ENCODE measurements at regions of chr13 and their contacts with region 1.

Region 1: GRCh38 chr13:41652727-41653361 is 195.5 kb downstream of the RGCC start:
- DNase-seq: peak; percentile 88
- H3K4me3 ChIP-seq: no peak overlapping the region
- H3K27ac ChIP-seq: peak overlapping the region; percentile 43
- H3K4me1 ChIP-seq: peaks cover 27% of the 10 kb centered on the region
- H3K27me3 ChIP-seq: no peaks in the 10 kb centered on the region
- CTCF ChIP-seq: peak; percentile 12 to 44
- POLR2A ChIP-seq: no peak

Region 2: DNA sequence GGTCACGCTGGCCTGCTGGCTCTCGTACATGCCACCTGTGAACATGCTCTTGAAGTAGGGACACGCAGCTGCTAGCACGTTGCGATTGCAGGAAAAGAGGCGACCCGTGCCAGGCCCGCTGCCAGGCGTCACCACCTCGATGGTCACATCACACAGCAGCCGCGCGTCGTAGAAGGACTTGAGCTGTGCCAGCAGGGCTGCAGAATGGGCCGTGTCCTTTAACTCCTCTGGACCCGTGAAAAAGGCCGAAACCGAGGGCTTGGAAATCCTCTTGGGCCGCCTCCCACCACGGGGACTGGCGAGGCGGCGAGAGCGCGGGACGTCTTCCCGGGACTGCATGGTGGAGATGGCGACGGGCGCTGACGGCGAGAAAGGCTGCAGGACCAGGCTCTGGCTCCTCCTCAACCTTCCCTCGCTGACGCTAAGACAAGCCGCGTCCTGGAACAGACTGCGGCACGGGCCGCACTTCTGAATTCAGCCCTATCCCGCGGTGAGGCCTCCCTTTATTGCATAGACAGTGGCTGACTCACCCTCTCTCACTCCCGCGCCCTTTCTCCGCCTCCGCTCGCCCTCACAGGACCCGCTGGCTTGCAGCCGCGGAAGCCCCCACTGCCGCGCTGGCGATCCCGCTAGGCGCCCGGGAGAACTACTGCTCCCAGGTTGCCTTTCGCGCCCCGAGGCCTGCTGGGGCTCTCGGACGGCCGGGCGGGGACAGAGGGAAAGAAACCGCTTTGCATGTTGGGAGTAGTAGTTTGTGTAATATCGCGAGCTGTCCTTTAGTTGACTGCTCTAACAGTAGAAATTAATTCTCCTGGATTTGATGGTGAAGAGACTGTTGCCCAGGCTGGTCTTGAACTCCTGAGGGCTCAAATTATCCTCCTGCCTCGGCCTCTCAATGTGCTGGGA is 458.7 kb before region 1 on chr13 and contains the start of gene KBTBD7:
- CTCF ChIA-PET with region 1: no interaction called
- POLR2A ChIA-PET with region 1: no interaction called
- dilution Hi-C with region 1: no loop called
- intact Hi-C with region 1: loop called (anchors 10 kb)
- DNase-seq: peak; percentile 99
- H3K4me3 ChIP-seq: peak within 1 kb of the TSS; percentile 48 to 60 (median 53)
- H3K27ac ChIP-seq: peak within 1 kb of the TSS; percentile 78
- H3K4me1 ChIP-seq: peaks cover 4% of the 10 kb centered on the region
- H3K27me3 ChIP-seq: no peaks in the 10 kb centered on the region
- CTCF ChIP-seq: no peak
- POLR2A ChIP-seq: peak; percentile 80
- total RNA-seq, gene KBTBD7: 3.1 and 4.4 TPM in 2 replicates

Region 3: DNA sequence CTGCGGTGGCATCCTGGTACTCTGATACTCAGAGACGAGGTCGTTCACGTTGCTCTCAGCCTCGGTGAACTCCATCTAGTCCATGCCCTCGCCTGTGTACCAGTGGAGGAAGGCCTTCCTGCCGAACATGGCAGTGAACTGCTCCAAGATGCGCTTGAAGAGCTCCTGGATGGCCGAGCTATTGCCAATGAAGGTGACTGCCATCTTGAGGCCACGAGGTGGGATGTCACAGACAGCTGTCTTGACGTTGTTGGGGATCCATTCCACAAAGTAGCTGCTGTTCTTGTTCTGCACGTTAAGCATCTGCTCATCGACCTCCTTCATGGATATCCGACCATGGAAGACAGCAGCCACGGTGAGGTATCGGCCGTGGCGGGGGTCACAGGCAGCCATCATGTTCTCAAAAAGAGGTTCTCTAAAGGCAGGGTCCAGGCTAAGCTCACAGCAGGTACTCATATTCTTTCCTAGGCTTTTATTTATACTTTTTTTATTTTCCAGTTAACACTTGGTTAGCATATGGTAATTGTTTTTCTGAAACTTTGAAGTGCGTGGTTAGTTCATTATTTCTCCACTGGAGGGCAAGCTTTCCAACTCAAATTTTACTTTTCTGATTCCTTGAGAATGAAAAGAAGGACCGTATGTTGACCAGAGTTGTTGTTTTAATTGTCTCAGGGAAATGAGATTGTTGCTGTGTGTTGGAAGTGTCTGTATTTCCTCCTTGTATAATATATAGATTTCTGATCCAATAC is 267.9 kb before region 1 on chr13:
- CTCF ChIA-PET with region 1: interaction called, 77 read pairs
- POLR2A ChIA-PET with region 1: no interaction called
- dilution Hi-C with region 1: no loop called
- intact Hi-C with region 1: loop called (anchors 1 kb)
- DNase-seq: peak; percentile 43
- H3K4me3 ChIP-seq: no peak overlapping the region
- H3K27ac ChIP-seq: no peak overlapping the region
- H3K4me1 ChIP-seq: peaks cover 4% of the 10 kb centered on the region
- H3K27me3 ChIP-seq: peaks cover 0 to 4% of the 10 kb centered on the region in 2 experiments
- CTCF ChIP-seq: peak; percentile 16 to 30
- POLR2A ChIP-seq: no peak

Region 4: GRCh38 chr13:41456768-41457588 is 195.9 kb before region 1 on chr13 and contains the start of gene RGCC:
- CTCF ChIA-PET with region 1: interaction called, 97 read pairs
- POLR2A ChIA-PET with region 1: interaction called, 4 read pairs
- dilution Hi-C with region 1: no loop called
- intact Hi-C with region 1: loop called (anchors 1 kb)
- DNase-seq: peak; percentile 74
- H3K4me3 ChIP-seq: peak within 1 kb of the TSS; percentile 56 to 90 (median 66)
- H3K27ac ChIP-seq: peak within 1 kb of the TSS; percentile 49
- H3K4me1 ChIP-seq: peaks cover 19% of the 10 kb centered on the region
- H3K27me3 ChIP-seq: peaks cover 11 to 12% of the 10 kb centered on the region in 2 experiments
- CTCF ChIP-seq: no peak
- POLR2A ChIP-seq: peak; percentile 87
- total RNA-seq, gene RGCC: 138 and 148 TPM in 2 replicates

Region 5: GRCh38 chr13:41587492-41587891 is 65.4 kb before region 1 on chr13:
- CTCF ChIA-PET with region 1: interaction called, 42 read pairs
- POLR2A ChIA-PET with region 1: no interaction called
- dilution Hi-C with region 1: no loop called
- intact Hi-C with region 1: no loop called
- DNase-seq: no peak
- H3K4me3 ChIP-seq: no peak overlapping the region
- H3K27ac ChIP-seq: no peak overlapping the region
- H3K4me1 ChIP-seq: peaks cover 3% of the 10 kb centered on the region
- H3K27me3 ChIP-seq: no peaks in the 10 kb centered on the region
- CTCF ChIP-seq: no peak
- POLR2A ChIP-seq: no peak

Region 6: DNA sequence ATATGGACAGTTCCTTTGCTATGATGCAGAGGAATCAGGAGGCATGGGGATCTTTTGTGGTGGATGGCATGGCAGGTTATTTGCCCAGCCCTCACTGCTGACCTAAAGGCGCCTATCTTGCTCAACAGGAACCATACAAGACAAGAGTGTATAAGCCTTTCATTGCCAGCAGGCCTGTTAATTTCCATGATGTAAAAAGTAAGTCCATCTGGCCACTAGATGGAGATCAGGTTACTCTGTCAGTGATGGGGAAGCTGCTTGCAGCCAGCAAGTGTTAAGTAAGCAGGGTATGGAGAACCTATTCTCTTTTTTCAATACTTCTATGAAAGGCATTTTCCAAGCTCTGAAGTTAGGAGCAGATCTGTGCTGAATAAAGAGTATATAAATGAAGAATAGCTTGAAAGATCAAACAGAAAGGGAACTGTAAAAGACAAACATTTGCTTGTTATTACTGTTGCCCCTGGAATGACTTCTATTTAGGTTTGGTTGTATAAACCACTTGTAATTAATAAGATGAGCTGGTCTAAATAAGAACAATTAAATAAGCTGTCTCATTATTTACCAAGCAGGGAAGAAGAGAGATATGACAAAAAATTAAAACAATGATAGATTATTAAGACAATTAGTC is 15.4 kb after region 1 on chr13:
- CTCF ChIA-PET with region 1: interaction called, 11 read pairs
- POLR2A ChIA-PET with region 1: interaction called, 3 read pairs
- dilution Hi-C with region 1: no loop called
- intact Hi-C with region 1: no loop called
- DNase-seq: peak; percentile 94
- H3K4me3 ChIP-seq: no peak overlapping the region
- H3K27ac ChIP-seq: no peak overlapping the region
- H3K4me1 ChIP-seq: no peaks in the 10 kb centered on the region
- H3K27me3 ChIP-seq: no peaks in the 10 kb centered on the region
- CTCF ChIP-seq: peak; percentile 54 to 67
- POLR2A ChIP-seq: no peak

Region 7: GRCh38 chr13:41700790-41701310 is 48.0 kb after region 1 on chr13:
- CTCF ChIA-PET with region 1: no interaction called
- POLR2A ChIA-PET with region 1: no interaction called
- dilution Hi-C with region 1: no loop called
- intact Hi-C with region 1: no loop called
- DNase-seq: peak; percentile 74
- H3K4me3 ChIP-seq: no peak overlapping the region
- H3K27ac ChIP-seq: no peak overlapping the region
- H3K4me1 ChIP-seq: peaks cover 16% of the 10 kb centered on the region
- H3K27me3 ChIP-seq: no peaks in the 10 kb centered on the region
- CTCF ChIP-seq: no peak
- POLR2A ChIP-seq: no peak